K562 (cell line): ENCODE measurements at regions of chr3 and their contacts with region 1.

Region 1: GRCh38 chr3:111712294-111713167 is 117.4 kb upstream of the ZBED2 start:
- DNase-seq: no peak
- ATAC-seq: no peak
- H3K4me3 ChIP-seq: no peak overlapping the region
- H3K27ac ChIP-seq: no peak overlapping the region
- H3K4me1 ChIP-seq: no peaks in the 10 kb centered on the region
- H3K27me3 ChIP-seq: no peaks in the 10 kb centered on the region
- CTCF ChIP-seq: no peak
- EP300 ChIP-seq: no peak
- POLR2A ChIP-seq: no peak
- RAD21 ChIP-seq: no peak

Region 2: GRCh38 chr3:111414531-111414930 is 298.0 kb before region 1 on chr3:
- CTCF ChIA-PET with region 1: no interaction called
- POLR2A ChIA-PET with region 1: no interaction called
- in situ Hi-C with region 1: no loop called
- intact Hi-C with region 1: no loop called
- DNase-seq: no peak
- ATAC-seq: no peak
- H3K4me3 ChIP-seq: no peak overlapping the region
- H3K27ac ChIP-seq: no peak overlapping the region
- H3K4me1 ChIP-seq: no peaks in the 10 kb centered on the region
- H3K27me3 ChIP-seq: no peaks in the 10 kb centered on the region
- CTCF ChIP-seq: no peak
- EP300 ChIP-seq: no peak
- POLR2A ChIP-seq: no peak
- RAD21 ChIP-seq: no peak

Region 3: DNA sequence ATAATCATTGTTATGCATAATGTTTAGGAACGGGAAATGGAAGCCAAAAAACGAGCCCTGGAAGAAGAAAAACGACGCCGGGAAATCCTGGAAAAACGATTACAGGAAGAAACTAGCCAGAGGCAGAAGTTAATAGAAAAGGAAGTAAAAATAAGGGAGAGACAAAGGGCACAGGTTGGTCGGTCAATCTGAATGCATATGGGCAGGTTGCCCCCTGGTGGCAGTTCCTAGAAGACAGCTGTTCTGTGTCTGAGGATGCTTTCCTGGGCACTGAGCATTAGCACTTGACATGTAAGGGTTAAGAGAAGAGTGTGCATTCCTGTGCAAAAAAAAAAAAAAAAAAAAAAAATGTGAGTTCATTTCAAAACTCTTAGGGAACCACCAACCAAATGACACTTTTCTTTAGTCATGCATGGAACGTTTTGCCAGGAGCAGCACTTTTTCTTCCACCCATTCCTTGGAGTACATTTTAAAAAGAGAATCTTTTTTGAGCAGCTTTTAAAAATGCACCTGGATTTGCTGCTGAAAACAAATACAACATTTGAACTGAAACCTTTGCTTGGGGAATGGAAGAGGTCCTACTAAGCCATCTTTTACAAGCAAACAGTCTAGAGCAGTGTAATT is 255.2 kb after region 1 on chr3:
- CTCF ChIA-PET with region 1: interaction called, 8 read pairs
- POLR2A ChIA-PET with region 1: no interaction called
- in situ Hi-C with region 1: loop called (anchors 5 kb)
- intact Hi-C with region 1: loop called (anchors 1 kb)
- DNase-seq: peak; percentile 35 to 67 (median 52)
- ATAC-seq: peak; percentile 93
- H3K4me3 ChIP-seq: no peak overlapping the region
- H3K27ac ChIP-seq: no peak overlapping the region
- H3K4me1 ChIP-seq: no peaks in the 10 kb centered on the region
- H3K27me3 ChIP-seq: no peaks in the 10 kb centered on the region; a peak in 2 of 5 replicates
- CTCF ChIP-seq: peak; percentile 66 to 69 (median 68)
- EP300 ChIP-seq: no peak
- POLR2A ChIP-seq: no peak
- RAD21 ChIP-seq: peak; percentile 52 to 73

Region 4: DNA sequence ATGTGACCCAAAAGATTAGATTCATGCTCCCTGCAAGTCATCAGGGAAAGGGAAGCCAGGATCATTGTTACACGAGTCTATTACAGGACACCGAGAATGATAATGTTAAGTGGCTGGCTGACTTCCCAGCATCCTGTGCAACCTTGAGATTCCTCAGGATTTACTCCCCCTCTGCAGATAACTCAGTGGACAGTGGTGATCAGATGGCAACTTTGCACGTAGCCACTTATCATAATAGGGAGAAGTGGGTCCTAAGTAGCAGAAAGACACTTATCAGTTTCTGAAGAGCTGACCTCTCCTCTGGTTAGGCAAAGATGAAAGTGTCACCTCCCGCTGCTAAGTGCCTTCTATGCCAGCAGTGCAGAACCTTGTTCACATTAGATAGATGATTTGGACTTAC is 315.3 kb after region 1 on chr3:
- CTCF ChIA-PET with region 1: no interaction called
- POLR2A ChIA-PET with region 1: no interaction called
- in situ Hi-C with region 1: no loop called
- intact Hi-C with region 1: no loop called
- DNase-seq: no peak
- ATAC-seq: no peak
- H3K4me3 ChIP-seq: no peak overlapping the region
- H3K27ac ChIP-seq: no peak overlapping the region
- H3K4me1 ChIP-seq: no peaks in the 10 kb centered on the region
- H3K27me3 ChIP-seq: no peaks in the 10 kb centered on the region
- CTCF ChIP-seq: no peak
- EP300 ChIP-seq: no peak
- POLR2A ChIP-seq: no peak
- RAD21 ChIP-seq: no peak